AG04449 (cell line): ENCODE measurements at regions of chr3 and their contacts with region 1.

Region 1: GRCh38 chr3:156151824-156152428 is 31.5 kb downstream of the KCNAB1 start:
- DNase-seq: peak; percentile 23
- H3K4me3 ChIP-seq: no peak overlapping the region
- CTCF ChIP-seq: peak; percentile 85

Region 2: DNA sequence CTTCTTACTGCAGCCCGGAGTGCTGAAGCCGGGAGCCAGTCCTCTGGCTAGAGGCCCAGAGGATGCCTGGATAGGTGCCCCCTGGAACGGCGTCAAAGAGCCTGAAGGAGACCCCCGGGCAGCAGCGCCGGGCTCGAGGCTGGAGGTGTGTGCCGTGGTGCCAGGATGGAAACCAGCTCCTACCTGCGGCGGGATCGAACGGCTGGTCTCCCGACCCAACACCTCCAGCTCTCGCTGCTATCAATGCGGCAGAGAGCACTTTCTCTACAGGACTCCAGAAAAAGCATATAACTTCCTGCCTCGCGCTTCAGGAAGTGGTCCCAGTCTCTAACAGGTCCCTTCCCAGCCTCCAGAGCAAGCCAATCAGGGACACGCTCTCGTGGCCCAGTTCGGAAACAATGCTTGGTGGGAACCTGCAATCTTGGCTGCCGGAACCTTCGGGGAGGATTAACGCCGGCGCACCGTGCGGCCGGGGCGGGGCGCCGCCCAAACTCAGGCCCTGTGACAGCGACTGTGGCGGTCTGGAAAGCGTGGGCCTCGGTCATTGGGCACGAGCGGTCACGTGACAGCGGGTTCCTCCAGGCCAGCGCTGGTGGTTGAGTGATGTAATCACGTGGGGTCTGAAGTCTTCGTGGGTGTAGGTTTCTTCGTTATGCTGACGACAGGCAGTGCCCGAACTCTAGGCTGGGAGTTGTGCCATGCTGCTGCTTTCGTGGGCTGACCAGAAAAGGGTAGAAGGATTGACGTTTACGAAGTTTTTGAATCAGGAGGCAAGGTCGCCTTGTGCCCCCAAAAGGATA is 297.6 kb before region 1 on chr3 and contains the start of gene SLC33A1:
- CTCF ChIA-PET with region 1: no interaction called
- POLR2A ChIA-PET with region 1: no interaction called
- DNase-seq: peak; percentile 95
- H3K4me3 ChIP-seq: peak within 1 kb of the TSS; percentile 97
- CTCF ChIP-seq: no peak

Region 3: GRCh38 chr3:156140001-156140595 is 11.8 kb before region 1 on chr3:
- CTCF ChIA-PET with region 1: interaction called, 18 read pairs
- POLR2A ChIA-PET with region 1: no interaction called
- DNase-seq: no peak
- H3K4me3 ChIP-seq: no peak overlapping the region
- CTCF ChIP-seq: no peak

Region 4: DNA sequence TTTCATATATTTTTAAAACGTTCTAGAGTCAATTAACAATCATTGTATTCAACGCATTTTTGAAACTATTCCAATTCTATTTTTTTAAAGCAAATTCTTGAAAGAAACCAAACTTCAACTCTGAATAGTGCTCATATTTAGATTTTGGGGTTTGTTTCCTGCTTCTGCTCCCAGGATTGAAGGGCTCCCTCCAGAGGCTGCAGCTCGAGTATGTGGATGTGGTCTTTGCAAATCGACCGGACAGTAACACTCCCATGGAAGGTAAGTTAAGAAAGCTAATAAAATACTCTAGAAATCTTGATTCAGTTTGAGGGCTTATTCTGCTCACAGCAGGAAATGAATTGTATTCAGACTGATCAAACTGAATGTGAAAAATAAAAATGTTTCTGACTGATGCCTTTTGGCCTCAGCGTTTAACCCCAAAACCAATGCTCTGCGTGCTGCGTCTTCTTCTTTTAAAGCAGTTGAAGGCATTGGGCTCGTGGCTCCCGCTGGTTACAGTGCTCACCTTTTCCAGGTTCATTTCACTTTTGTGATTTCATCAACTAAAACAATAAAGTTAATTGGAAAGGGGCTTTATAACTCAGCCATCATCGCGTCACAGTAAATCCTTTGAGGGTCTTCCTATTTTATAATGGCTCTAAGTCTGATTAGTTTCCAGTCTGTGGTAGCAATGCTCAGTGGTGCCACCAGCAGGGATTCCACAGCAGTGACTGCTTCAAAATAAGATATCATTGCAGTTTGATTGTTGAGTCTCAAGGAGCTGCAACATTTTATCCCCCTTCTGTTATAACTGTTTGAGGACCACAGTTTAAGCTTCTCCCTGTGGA is 322.8 kb after region 1 on chr3:
- CTCF ChIA-PET with region 1: interaction called, 17 read pairs
- POLR2A ChIA-PET with region 1: no interaction called
- DNase-seq: no peak
- H3K4me3 ChIP-seq: no peak overlapping the region
- CTCF ChIP-seq: peak; percentile 14

Region 5: DNA sequence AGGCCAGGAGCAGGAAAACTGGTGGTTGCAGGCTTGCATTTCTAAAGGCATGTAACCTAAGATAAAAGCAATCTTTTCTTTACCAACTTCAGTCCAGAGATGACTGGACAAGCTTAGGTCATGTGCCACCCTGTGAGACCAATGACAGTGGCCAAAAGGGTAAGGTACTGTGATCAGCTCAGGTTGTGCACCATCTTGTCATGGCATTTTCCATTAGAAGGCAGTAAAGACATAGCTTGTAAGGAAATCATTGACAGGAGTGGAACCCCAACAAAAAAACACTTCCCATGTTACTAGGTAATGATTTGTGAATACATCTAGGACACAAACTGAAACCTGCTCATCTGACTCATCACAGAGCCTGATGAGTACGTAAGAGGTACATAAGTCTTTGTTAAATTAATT is 367.8 kb after region 1 on chr3:
- CTCF ChIA-PET with region 1: interaction called, 471 read pairs
- POLR2A ChIA-PET with region 1: no interaction called
- DNase-seq: no peak
- H3K4me3 ChIP-seq: no peak overlapping the region
- CTCF ChIP-seq: no peak

Region 6: DNA sequence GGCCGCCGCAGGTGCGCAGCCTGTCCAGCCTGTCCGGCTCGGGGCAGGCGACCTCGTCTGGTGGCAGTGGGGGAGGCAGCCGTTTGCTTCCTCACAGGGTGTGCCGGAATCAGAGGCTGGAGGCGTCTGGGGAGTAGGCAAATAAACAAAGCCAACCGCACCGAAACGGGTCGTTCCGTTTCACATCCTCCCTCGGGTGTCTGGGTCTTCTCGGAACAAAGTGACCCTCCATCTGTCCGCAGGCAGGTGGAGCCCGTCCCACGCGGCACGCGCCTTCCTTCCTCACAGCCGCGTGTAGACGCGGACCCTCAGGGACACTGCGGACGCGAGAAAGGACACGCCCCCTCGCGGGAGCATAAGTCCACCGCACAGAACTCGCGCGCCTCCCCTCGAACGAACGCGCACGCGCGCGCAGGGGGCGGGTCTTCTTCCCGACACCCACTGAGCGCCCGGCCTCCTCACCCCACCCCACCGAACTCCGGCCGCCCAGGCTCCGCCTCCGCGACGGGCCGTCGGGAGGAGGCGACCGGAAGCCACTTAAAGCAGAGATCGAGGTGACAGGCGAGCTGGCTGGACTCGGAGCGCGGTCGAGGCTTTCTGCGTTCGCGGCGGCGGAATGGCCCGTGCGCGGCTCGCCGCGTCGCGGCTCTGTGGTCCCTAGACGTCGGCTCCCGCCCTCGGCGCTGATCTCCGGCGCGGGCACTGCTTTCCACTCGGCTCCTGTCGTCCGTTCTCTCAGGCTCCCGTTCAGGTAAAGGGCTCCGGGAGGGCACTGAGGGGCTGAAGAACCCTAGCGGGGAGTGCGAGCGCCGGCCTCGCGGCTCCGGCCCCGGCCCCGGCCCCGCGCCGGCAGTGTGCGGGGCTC is 522.4 kb after region 1 on chr3 and contains the start of gene TIPARP:
- CTCF ChIA-PET with region 1: interaction called, 26 read pairs
- POLR2A ChIA-PET with region 1: no interaction called
- DNase-seq: peak; percentile 77
- H3K4me3 ChIP-seq: peak within 1 kb of the TSS; percentile 78
- CTCF ChIP-seq: peak; percentile 73

Region 7: GRCh38 chr3:157201648-157202278 is 1049.8 kb after region 1 on chr3:
- CTCF ChIA-PET with region 1: interaction called, 26 read pairs
- POLR2A ChIA-PET with region 1: no interaction called
- DNase-seq: no peak
- H3K4me3 ChIP-seq: no peak overlapping the region
- CTCF ChIP-seq: peak; percentile 25